Vagina (tissue), 2 donors: ENCODE measurements at regions of chr6 and their contacts with region 1.

Region 1: GRCh38 chr6:20441921-20442320 is 40.2 kb downstream of the E2F3 start:
- DNase-seq: no peak
- H3K4me3 ChIP-seq: no peak overlapping the region
- H3K27ac ChIP-seq: no peak overlapping the region
- H3K4me1 ChIP-seq: peaks cover 5% of the 10 kb centered on the region
- H3K27me3 ChIP-seq: no peaks in the 10 kb centered on the region
- CTCF ChIP-seq: no peak
- POLR2A ChIP-seq: no peak

Region 2: DNA sequence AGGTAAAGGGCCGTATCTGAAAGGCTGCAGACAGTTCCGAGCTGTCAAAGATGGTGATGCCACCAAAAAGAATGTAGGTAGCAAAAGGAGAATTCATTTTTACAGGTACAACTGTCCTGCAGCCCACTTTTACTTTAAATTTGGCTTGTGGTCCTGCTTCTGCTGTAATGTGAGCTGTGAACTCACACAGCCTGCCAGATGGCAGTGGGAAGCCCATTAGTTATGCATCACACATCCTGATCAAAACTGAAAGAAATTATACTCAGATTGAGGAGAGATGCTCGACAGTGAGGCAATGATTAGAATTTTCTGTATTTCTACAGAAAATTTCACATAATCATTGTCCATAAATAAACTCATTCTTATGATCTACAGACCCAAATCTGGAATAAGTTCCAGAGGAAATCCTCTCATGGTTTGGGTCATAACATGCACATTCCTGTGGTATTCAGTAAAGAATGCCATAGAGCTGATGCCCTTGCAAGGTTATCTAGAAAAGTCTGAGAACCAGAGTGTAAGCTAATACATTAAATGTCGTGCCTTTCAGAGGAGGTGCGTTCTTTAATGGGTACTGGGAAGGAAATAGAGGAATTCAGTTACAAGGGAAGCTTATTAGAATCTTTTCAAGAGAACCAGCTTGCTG is 64.2 kb before region 1 on chr6:
- intact Hi-C with region 1: no loop called
- DNase-seq: no peak
- H3K4me3 ChIP-seq: no peak overlapping the region
- H3K27ac ChIP-seq: no peak overlapping the region
- H3K4me1 ChIP-seq: no peaks in the 10 kb centered on the region
- H3K27me3 ChIP-seq: no peaks in the 10 kb centered on the region
- CTCF ChIP-seq: no peak
- POLR2A ChIP-seq: no peak

Region 3: DNA sequence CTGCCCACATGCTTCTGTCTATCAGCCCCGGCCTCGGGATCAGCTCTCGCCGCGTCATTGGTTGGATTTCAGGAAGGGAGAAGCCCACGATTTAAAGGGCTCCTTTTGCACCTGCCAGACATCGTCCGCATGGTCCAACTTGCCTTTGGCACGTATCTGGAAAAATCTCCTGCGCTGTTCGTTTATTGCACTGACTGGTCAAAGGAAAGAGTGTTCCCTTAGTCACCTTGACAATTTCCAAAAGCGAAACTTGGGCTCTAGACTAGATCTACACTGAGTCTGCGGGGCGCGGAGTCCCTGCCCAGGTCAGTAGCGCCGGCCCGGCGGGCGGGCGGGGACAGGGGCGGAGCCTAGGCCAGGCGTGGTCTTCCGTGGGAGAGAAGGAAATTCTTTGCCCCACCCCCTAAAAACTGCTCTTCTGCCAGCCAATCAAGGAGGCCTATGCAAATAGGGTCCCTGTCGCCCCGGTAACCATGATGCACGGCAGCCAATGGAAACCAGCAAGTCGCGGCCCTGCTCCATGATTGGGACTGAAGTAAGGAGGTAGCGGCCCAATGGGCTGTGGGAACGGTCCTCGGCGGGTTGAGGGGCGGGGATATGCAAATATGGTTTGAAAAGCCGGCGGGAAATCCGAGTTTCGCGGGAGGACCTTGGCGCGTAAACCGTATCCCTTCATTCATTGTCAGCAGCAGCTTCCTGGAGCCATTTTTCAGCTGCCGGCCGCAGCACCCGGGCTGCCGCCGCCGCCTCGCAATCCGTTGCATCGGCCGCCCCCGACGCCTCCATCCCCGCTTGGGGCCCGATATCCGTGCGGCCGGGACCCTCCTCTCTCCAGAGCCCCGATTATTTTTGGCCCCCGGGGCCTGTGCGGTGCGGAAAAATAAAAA is 40.5 kb before region 1 on chr6 and contains the start of gene E2F3:
- intact Hi-C with region 1: loop called (anchors 1 kb)
- DNase-seq: peak; percentile 100
- H3K4me3 ChIP-seq: peak within 1 kb of the TSS; percentile 90
- H3K27ac ChIP-seq: peak within 1 kb of the TSS; percentile 88
- H3K4me1 ChIP-seq: peaks cover 12% of the 10 kb centered on the region
- H3K27me3 ChIP-seq: no peaks in the 10 kb centered on the region
- CTCF ChIP-seq: no peak
- POLR2A ChIP-seq: peak in 1 of 2 donors; percentile 31
- total RNA-seq, gene E2F3: 4.4 TPM